CD8-positive, alpha-beta memory T cell (primary cell): ENCODE measurements at regions of chr19 and their contacts with region 1.

Region 1: GRCh38 chr19:13861732-13862531 is 15.0 kb upstream of the NANOS3 start:
- DNase-seq: peak; percentile 84 to 94 (median 86)
- H3K4me3 ChIP-seq: peak overlapping the region; percentile 91
- H3K4me3 Mint-ChIP-seq: peak overlapping the region; percentile 93 to 99 (median 98)
- H3K27ac ChIP-seq: peak overlapping the region; percentile 96
- H3K27ac Mint-ChIP-seq: peak overlapping the region; percentile 99 to 100 (median 100)
- H3K4me1 ChIP-seq: peaks cover 33% of the 10 kb centered on the region
- H3K4me1 Mint-ChIP-seq: peaks cover 33 to 51% (median 48%) of the 10 kb centered on the region in 3 donors
- H3K27me3 ChIP-seq: peaks cover 21% of the 10 kb centered on the region
- H3K27me3 Mint-ChIP-seq: peaks cover 22 to 28% of the 10 kb centered on the region in 2 donors

Region 2: GRCh38 chr19:13633109-13633508 is 228.8 kb before region 1 on chr19:
- CTCF ChIA-PET with region 1: no interaction called
- POLR2A ChIA-PET with region 1: no interaction called
- DNase-seq: no peak
- H3K4me3 ChIP-seq: no peak overlapping the region
- H3K4me3 Mint-ChIP-seq: no peak overlapping the region
- H3K27ac ChIP-seq: no peak overlapping the region
- H3K27ac Mint-ChIP-seq: no peak overlapping the region
- H3K4me1 ChIP-seq: no peaks in the 10 kb centered on the region
- H3K4me1 Mint-ChIP-seq: no peaks in the 10 kb centered on the region
- H3K27me3 ChIP-seq: no peaks in the 10 kb centered on the region
- H3K27me3 Mint-ChIP-seq: peaks cover 13 to 30% of the 10 kb centered on the region in 2 donors

Region 3: GRCh38 chr19:13748169-13748828 is 113.6 kb before region 1 on chr19:
- CTCF ChIA-PET with region 1: interaction called, 14 read pairs
- POLR2A ChIA-PET with region 1: interaction called, 4 read pairs
- DNase-seq: no peak
- H3K4me3 ChIP-seq: peak overlapping the region; percentile 70
- H3K4me3 Mint-ChIP-seq: peak overlapping the region; percentile 84 to 96 (median 89)
- H3K27ac ChIP-seq: peak overlapping the region; percentile 89
- H3K27ac Mint-ChIP-seq: peak overlapping the region; percentile 79 to 97 (median 95)
- H3K4me1 ChIP-seq: peaks cover 20% of the 10 kb centered on the region
- H3K4me1 Mint-ChIP-seq: peaks cover 22 to 38% (median 33%) of the 10 kb centered on the region in 3 donors
- H3K27me3 ChIP-seq: no peaks in the 10 kb centered on the region
- H3K27me3 Mint-ChIP-seq: no peaks in the 10 kb centered on the region

Region 4: DNA sequence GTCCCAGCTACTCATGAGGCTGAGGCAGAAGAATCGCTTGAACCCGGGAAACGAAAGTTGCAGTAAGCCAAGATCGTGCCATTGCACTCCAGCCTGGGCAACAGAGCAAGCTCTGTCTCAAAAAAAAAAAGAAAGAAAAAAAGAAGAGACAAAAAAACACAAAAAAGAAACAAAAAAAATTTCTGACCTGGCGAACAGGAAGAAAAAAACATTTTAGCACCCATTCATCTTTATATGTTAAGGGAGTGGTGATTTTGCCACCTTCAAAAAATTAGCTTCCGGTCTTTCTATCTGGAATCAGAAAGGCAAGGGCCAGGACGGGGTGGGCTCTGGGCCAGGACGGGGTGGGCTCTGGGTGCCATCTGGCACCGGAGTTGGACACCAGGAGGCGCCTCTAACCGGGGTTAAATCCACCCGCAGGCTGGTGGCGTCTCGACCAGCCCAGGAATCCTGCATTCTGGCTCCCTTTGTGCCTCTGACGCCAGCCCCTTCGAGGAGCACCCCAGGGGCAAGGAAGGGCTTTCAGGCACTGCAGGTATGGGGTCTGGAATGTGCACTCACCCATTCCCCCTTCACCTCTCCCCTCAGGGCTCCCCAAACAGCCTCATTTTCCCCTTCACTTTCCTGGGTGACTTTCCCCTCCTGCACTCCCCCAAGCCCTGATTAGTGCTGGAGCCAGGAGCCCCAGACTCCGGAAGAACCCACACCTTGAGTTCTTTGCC is 77.0 kb before region 1 on chr19:
- CTCF ChIA-PET with region 1: interaction called, 219 read pairs
- POLR2A ChIA-PET with region 1: interaction called, 29 read pairs
- DNase-seq: peak; percentile 59 to 82 (median 62)
- H3K4me3 ChIP-seq: no peak overlapping the region
- H3K4me3 Mint-ChIP-seq: peak overlapping the region; percentile 9 to 60 (median 42)
- H3K27ac ChIP-seq: no peak overlapping the region
- H3K27ac Mint-ChIP-seq: peak overlapping the region in 6 of 8 donors; percentile 24 to 88 (median 76)
- H3K4me1 ChIP-seq: peaks cover 40% of the 10 kb centered on the region
- H3K4me1 Mint-ChIP-seq: peaks cover 24 to 42% (median 28%) of the 10 kb centered on the region in 3 donors
- H3K27me3 ChIP-seq: no peaks in the 10 kb centered on the region
- H3K27me3 Mint-ChIP-seq: no peaks in the 10 kb centered on the region

Region 5: GRCh38 chr19:13804830-13805683 is 56.9 kb before region 1 on chr19:
- CTCF ChIA-PET with region 1: interaction called, 17 read pairs
- POLR2A ChIA-PET with region 1: no interaction called
- DNase-seq: no peak
- H3K4me3 ChIP-seq: no peak overlapping the region
- H3K4me3 Mint-ChIP-seq: no peak overlapping the region
- H3K27ac ChIP-seq: no peak overlapping the region
- H3K27ac Mint-ChIP-seq: peak overlapping the region in 2 of 8 donors; percentile 4 to 32
- H3K4me1 ChIP-seq: no peaks in the 10 kb centered on the region
- H3K4me1 Mint-ChIP-seq: peaks cover 0 to 2% (median 0%) of the 10 kb centered on the region in 3 donors
- H3K27me3 ChIP-seq: no peaks in the 10 kb centered on the region
- H3K27me3 Mint-ChIP-seq: no peaks in the 10 kb centered on the region

Region 6: DNA sequence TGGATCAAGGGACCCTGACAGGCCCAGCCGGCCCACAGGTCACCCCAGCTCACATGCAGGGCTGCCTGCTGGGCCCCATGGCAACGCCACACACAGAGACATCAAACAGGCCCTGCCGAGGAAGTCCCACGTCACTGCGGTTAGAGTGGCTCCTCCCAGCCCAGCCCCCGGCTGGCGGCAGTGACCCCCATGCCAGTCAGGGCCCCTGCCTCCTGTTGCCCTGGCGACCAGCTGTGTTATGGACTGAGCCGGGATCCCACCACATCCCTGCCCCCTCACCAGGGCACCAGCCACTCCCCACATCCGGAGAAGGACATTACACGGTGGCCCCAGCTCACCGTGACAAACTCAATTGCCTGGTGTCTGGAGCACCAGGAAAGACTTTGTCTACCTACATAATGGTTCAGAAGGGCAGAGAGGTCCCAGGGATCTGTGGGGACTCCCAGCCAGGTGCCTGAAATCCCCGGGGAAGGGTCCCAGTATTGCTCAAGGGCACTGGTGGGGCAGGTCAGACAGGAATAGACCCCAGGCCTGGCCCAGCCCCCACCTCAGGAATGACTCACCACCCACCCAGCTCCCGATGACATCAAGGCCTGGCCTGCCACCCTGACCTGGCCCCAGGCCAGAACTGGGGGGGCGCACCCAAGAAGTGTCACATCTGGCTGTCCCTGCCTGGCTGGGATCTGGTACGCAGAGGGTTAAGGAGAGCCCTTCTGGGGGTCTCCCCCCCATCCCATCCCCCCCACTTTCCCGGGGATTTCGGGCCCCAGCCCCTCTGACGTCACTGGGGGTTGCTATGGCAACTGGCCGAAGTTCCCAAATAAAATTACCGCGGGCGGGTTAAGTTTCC is 15.2 kb before region 1 on chr19:
- CTCF ChIA-PET with region 1: interaction called, 73 read pairs
- POLR2A ChIA-PET with region 1: interaction called, 29 read pairs
- DNase-seq: peak; percentile 94 to 100 (median 99)
- H3K4me3 ChIP-seq: peak overlapping the region; percentile 70
- H3K4me3 Mint-ChIP-seq: peak overlapping the region; percentile 83 to 92 (median 89)
- H3K27ac ChIP-seq: peak overlapping the region; percentile 100
- H3K27ac Mint-ChIP-seq: peak overlapping the region; percentile 99 to 100 (median 100)
- H3K4me1 ChIP-seq: peaks cover 62% of the 10 kb centered on the region
- H3K4me1 Mint-ChIP-seq: peaks cover 43 to 81% (median 45%) of the 10 kb centered on the region in 3 donors
- H3K27me3 ChIP-seq: no peaks in the 10 kb centered on the region
- H3K27me3 Mint-ChIP-seq: peaks cover 0 to 18% of the 10 kb centered on the region in 2 donors

Region 7: DNA sequence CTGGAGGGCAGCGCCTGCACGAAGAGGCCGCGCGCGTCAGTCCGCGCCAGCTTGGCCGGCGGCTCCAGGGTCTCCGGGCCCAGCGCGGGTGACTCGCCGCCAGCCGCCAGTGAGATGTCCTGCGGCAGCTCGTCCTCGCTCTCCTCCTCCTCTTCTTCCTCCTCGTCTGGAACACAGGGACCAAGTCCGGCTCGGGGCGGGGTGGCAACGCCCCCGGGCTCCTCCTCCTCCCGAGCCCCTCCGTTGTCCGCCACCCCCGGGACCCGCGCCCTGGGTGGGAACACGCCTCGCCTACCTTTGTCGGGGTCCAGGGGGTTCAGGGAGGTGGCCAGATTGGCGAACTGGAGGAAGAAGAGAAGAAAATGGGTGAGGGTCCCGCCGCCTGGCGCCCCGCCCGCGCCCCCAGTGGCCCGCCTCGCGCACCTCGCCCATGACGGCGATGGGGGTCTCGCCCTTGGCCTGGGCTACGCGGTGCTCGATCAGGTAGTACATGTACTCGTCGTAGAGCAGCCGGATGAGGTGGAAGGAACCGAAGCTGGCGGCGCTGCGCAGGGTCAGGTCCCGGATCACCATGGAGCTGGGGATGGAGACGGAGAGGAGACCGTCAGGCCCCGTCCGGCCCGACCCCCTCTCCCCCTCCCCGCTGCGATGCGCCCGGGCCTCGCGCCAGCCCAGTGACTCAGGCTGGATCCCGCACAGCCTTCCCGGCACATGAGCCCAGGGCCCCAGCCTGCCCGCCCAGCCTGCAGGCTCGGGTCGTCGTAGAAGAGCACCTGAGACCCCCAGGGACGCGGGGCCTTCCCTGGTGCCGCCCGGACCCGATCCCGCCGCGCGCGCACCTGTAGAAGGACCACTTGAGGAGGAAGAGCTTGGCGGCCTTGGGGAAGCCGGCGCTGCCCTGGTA is 101.0 kb after region 1 on chr19:
- CTCF ChIA-PET with region 1: no interaction called
- POLR2A ChIA-PET with region 1: no interaction called
- DNase-seq: no peak
- H3K4me3 ChIP-seq: no peak overlapping the region
- H3K4me3 Mint-ChIP-seq: no peak overlapping the region
- H3K27ac ChIP-seq: no peak overlapping the region
- H3K27ac Mint-ChIP-seq: no peak overlapping the region
- H3K4me1 ChIP-seq: no peaks in the 10 kb centered on the region
- H3K4me1 Mint-ChIP-seq: peaks cover 0 to 8% (median 0%) of the 10 kb centered on the region in 3 donors
- H3K27me3 ChIP-seq: no peaks in the 10 kb centered on the region
- H3K27me3 Mint-ChIP-seq: no peaks in the 10 kb centered on the region